ENCODE measurements at regions of chr3 and their contacts with region 1.

Region 1: DNA sequence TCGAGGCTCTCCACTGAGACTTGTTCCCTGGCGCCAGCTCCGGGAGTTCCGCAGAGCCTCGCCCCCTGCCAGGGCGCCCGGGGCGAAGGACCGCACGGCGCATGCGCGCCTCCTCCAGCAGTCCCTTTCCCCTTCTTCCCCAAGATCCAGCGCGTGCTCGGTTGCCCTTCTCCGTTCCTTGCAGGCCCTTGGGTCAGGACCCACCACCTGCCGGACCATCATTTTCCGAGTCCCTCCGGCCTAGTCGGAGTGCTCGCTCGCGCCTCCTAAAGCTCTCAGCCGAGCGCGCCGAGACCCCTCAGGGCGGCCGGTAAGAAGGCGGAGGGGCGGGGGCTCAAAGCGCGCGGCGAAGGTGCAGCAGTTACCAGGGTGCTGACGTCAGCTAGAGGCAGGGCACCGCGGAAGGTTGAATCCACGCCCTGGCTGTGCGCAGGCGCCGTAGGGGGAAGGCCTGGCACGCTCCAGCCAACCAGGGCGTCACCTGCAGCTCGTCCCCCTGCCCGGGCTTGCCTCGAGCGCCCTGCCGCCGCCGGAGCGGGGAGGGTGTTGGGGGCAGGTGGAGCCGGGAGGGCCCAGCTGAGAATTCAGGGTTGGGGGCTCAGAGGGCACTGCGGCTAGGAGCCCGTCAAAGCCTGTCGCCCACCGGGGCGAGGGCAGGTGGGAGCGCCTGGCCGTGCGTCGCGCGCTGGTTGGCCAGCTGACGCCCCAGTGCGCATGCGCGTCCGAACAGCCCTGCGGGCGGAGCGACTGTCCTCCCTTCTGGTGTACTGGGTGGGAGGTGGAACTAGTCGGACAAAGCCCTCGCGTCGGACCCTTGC is at the start of gene TCAIM:
- DNase-seq: peak; percentile 99
- ATAC-seq: peak; percentile 97 to 98
- total RNA-seq, gene TCAIM: 22.9 to 26.7 TPM

Region 2: DNA sequence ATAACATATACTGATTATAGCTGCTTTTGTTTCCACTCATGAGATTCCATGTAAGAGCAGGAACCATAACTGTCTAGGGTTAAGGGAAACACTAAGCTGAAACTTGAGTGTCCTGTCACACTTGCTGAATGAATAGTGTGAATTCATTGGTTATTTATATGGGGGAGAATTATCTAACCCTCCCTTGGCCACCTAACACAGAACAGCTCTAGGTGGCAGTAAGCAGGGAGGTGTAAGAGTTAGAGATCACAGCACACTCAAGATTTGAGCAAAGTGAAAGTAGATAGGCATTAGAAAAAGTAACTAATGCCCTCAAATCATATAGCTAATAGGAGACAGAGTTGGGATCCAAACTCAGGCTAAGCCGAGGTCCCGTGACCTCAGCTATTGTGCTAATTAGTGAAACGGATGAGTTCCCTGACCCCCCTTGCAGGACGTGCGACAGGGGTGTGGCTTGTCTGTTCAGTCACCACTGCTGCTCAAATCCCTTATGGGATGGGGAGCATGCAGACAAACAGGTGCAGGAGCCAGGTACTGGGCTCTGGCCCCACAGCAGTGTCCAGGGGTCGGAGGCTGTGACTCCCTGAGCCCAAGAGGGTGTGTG is 688.8 kb before region 1 on chr3:
- intact Hi-C with region 1: no loop called
- DNase-seq: no peak
- ATAC-seq: peak in 1 of 2 donors; percentile 38

Region 3: GRCh38 chr3:44477312-44478030 is 139.3 kb after region 1 on chr3 and contains the start of gene ZNF445:
- intact Hi-C with region 1: loop called in 1 of 2 experiments (anchors 10 kb)
- DNase-seq: peak; percentile 85
- ATAC-seq: peak; percentile 99
- total RNA-seq, gene ZNF445: 11.1 to 13.5 TPM